ENCODE measurements at regions of chr6 and their contacts with region 1.

Region 1: DNA sequence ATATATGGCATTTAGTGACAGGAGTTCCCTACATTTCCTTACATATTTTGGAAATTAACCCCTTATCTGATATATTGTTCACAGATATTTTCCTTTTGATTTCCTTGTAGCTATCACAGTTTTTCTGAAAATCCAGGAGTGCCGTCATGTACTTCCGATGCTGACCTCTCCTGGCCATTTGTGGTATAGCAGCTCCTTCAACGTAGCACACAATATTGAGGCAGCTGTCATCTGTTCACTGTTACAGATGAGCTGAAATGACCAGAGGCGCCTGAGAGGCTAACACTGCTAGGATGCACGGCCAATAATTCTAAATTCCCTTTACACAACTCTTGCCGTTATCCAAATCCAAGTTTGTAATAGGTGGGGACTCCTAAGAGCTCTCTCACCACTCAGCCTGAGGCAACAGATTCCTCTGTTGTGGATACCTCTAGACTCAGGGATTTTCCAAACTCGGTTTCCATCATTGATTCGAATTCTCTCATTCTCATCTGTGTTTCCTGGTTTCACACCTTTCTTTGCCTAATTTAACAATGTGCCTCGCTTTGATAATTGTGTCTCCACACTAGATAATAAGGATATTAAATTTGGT is 53.0 kb downstream of the MMUT start:
- DNase-seq: peak; percentile 70
- H3K4me3 Mint-ChIP-seq: no peak overlapping the region
- H3K27ac Mint-ChIP-seq: no peak overlapping the region
- H3K4me1 Mint-ChIP-seq: no peaks in the 10 kb centered on the region
- H3K27me3 Mint-ChIP-seq: peaks cover 5% of the 10 kb centered on the region

Region 2: DNA sequence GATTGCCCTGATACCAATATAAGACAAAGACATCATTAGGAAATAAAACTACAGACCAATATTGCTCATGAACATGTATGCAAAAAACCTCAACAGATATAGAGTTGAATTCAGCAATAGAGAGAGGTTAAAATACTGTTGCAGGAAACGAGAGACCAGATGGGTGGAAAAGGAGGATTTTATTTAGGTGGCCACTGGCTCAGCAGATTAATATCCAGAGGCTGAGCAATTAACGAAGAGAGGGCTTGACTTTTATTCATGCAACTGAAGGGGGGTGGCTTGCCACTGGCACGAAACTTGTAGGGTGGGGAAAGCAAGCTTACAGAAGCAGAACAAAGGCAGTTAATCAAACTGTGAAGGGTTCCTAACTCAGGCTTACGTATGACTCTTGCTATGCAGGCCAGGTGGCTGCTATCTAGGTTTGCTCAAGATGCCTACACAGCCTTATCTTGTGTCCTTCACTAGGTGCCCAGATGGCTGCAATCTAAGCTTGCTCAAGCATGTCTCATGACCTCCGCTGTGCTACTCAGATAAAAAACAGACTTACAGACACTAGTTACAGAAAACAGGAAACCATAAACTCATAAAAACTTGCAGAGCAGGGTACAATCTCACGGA is 73.4 kb before region 1 on chr6:
- CTCF ChIA-PET with region 1: no interaction called
- POLR2A ChIA-PET with region 1: no interaction called
- intact Hi-C with region 1: no loop called
- DNase-seq: no peak
- H3K4me3 Mint-ChIP-seq: no peak overlapping the region
- H3K27ac Mint-ChIP-seq: no peak overlapping the region
- H3K4me1 Mint-ChIP-seq: no peaks in the 10 kb centered on the region
- H3K27me3 Mint-ChIP-seq: no peaks in the 10 kb centered on the region

Region 3: DNA sequence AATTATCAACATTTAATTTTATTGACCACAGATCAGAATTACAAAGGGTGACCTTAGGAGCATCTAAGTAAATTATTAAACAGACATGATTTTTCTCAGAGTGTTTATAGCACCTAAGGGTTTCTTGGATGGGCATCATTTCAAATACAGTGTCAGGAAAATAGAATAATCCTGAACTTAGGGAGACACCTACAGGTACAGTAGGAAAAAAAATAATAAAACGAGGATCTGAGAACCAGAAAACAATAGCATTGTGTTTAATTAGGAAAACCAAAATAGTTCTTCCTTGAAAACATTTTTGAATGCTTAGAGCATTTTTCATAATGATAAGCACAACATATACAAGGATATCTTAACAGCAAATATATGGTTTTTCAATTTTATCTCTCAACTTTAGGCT is 13.8 kb after region 1 on chr6:
- CTCF ChIA-PET with region 1: interaction called, 21 read pairs
- POLR2A ChIA-PET with region 1: no interaction called
- intact Hi-C with region 1: no loop called
- DNase-seq: no peak
- H3K4me3 Mint-ChIP-seq: no peak overlapping the region
- H3K27ac Mint-ChIP-seq: no peak overlapping the region
- H3K4me1 Mint-ChIP-seq: no peaks in the 10 kb centered on the region
- H3K27me3 Mint-ChIP-seq: no peaks in the 10 kb centered on the region

Measured in activated CD4-positive, alpha-beta memory T cell treated with anti-CD3 and anti-CD28 coated beads for 36 hours (primary cell).